MCF 10A (cell line): ENCODE measurements at regions of chr2 and their contacts with region 1.

Region 1: DNA sequence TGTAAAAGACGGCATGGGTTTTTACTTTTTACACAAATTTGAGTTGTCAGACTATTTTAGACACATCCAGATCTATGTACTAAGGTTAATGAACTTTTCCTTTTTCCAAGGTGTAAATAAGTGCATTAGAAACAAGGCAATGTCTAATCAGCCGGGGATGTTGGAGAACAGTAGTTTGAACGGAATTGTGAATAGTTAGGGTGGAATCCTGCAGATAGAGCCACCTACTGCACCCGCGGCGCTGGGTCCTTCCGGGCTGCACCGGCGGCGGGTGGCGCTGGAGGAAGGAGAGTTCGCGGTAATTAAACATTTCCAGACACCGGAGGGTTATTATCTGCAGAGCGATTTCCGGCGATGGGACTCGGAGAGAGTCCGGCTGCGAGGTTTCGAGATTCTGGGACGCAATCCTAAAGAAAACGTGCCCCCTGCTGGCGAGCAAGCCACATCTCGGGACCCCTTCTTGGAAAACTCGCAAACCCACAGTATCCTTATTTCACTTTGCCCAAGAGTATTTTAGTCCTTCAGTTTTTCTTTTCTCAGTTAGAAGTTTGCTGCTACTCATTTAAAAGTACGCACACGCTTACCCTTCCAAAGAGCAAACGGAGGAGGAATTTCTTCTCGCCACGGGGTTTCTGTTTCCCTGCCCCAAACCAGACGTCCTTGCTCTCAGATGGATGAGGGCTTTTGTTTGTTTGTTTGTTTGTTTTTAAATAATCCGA is 4.5 kb upstream of the OSR1 start:
- DNase-seq: peak; percentile 88
- H3K4me3 Mint-ChIP-seq: peak overlapping the region; percentile 87
- H3K27ac Mint-ChIP-seq: no peak overlapping the region
- H3K4me1 Mint-ChIP-seq: peaks cover 6% of the 10 kb centered on the region
- H3K27me3 Mint-ChIP-seq: no peaks in the 10 kb centered on the region
- CTCF ChIP-seq: peak; percentile 70

Region 2: GRCh38 chr2:18435421-18436037 is 927.4 kb before region 1 on chr2:
- CTCF ChIA-PET with region 1: interaction called, 3 read pairs
- POLR2A ChIA-PET with region 1: no interaction called
- intact Hi-C with region 1: loop called (anchors 1 kb)
- DNase-seq: peak; percentile 69
- H3K4me3 Mint-ChIP-seq: no peak overlapping the region
- H3K27ac Mint-ChIP-seq: no peak overlapping the region
- H3K4me1 Mint-ChIP-seq: no peaks in the 10 kb centered on the region
- H3K27me3 Mint-ChIP-seq: no peaks in the 10 kb centered on the region
- CTCF ChIP-seq: peak; percentile 63

Region 3: GRCh38 chr2:18855027-18855426 is 507.9 kb before region 1 on chr2:
- CTCF ChIA-PET with region 1: interaction called, 3 read pairs
- POLR2A ChIA-PET with region 1: no interaction called
- intact Hi-C with region 1: loop called (anchors 1 kb)
- DNase-seq: peak; percentile 32
- H3K4me3 Mint-ChIP-seq: no peak overlapping the region
- H3K27ac Mint-ChIP-seq: no peak overlapping the region
- H3K4me1 Mint-ChIP-seq: no peaks in the 10 kb centered on the region
- H3K27me3 Mint-ChIP-seq: no peaks in the 10 kb centered on the region
- CTCF ChIP-seq: peak; percentile 35

Region 4: DNA sequence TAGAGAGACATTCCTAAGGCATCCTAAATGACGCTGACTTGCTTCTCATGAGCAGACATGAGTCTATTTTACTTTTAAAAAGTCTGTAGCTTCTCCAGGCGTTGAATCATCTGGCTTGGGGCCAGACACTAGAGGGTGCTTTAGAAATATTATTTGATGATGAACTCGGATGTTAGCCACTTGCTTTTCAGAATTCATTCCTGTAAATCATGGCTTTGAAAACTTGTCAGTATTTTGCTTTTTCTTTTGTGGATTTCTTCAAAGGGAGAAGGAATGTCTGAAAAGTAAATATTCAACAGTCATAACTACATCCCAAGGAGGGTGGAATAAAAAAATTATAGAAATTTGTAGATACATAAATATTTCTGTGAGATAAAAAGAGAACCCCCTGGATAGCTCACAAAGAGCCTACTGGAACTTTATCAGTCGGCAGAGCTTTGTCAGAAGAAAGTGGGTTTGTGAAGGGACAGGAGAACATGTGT is 375.3 kb before region 1 on chr2:
- CTCF ChIA-PET with region 1: interaction called, 5 read pairs
- POLR2A ChIA-PET with region 1: no interaction called
- intact Hi-C with region 1: loop called (anchors 1 kb)
- DNase-seq: peak; percentile 94
- H3K4me3 Mint-ChIP-seq: no peak overlapping the region
- H3K27ac Mint-ChIP-seq: peak overlapping the region; percentile 27
- H3K4me1 Mint-ChIP-seq: peaks cover 17% of the 10 kb centered on the region
- H3K27me3 Mint-ChIP-seq: no peaks in the 10 kb centered on the region
- CTCF ChIP-seq: no peak

Region 5: DNA sequence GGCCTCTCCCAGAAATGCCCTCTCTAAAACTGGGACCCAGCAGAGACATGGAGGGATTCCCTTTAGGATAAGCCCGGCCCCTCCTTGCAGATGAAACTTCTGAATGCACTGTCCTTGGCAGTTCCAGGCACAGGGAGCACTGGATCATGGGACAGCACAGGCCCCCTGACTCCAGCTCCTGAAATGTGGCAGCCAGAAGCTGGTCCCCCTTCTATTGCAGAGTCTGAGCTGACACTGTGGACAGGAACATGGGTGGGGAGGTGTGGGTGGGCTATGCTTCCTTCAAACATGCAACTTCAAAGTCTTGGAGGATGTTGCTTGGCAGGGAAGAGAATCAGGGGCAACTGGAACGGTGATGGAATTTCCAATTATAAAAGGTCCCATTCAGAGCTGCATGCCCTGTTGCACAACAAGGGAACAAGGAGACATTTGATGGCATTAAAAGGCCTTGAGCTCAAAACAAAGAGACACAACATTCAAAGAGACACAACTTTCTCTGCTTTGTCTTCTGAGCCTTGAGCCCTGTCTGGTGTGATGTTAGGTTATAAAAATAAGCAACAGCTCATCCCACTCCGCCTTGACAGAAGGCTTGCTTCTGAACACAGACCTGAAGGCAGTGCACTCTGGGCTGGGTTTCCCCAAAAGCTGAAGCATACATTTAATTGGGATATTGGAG is 243.4 kb before region 1 on chr2:
- CTCF ChIA-PET with region 1: no interaction called
- POLR2A ChIA-PET with region 1: no interaction called
- intact Hi-C with region 1: no loop called
- DNase-seq: no peak
- H3K4me3 Mint-ChIP-seq: no peak overlapping the region
- H3K27ac Mint-ChIP-seq: peak overlapping the region; percentile 39
- H3K4me1 Mint-ChIP-seq: peaks cover 34% of the 10 kb centered on the region
- H3K27me3 Mint-ChIP-seq: no peaks in the 10 kb centered on the region
- CTCF ChIP-seq: no peak

Region 6: DNA sequence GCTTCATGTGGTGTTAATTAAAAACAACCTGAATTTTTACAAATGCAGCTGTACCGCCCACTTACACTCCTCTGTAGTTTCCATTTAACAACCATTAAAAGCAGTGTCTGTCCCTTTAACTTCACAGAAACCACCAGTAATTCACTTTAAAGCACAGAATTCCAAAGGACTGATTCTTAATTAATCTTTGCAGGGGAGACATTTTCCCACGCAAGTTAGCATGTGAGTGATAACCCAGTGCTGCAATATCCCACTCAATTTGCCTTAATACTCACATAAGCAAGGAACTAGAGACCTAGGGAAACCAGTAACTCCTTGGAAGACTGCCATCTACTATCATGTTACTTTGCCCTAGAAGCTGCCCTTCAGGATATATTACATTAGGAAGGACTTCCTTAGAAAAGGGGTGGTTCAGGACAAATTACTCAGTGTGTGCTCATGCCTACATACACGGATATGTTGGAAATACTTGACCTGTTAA is 106.8 kb before region 1 on chr2:
- CTCF ChIA-PET with region 1: no interaction called
- POLR2A ChIA-PET with region 1: no interaction called
- intact Hi-C with region 1: no loop called
- DNase-seq: peak; percentile 85
- H3K4me3 Mint-ChIP-seq: no peak overlapping the region
- H3K27ac Mint-ChIP-seq: peak overlapping the region; percentile 69
- H3K4me1 Mint-ChIP-seq: peaks cover 19% of the 10 kb centered on the region
- H3K27me3 Mint-ChIP-seq: no peaks in the 10 kb centered on the region
- CTCF ChIP-seq: no peak

Region 7: DNA sequence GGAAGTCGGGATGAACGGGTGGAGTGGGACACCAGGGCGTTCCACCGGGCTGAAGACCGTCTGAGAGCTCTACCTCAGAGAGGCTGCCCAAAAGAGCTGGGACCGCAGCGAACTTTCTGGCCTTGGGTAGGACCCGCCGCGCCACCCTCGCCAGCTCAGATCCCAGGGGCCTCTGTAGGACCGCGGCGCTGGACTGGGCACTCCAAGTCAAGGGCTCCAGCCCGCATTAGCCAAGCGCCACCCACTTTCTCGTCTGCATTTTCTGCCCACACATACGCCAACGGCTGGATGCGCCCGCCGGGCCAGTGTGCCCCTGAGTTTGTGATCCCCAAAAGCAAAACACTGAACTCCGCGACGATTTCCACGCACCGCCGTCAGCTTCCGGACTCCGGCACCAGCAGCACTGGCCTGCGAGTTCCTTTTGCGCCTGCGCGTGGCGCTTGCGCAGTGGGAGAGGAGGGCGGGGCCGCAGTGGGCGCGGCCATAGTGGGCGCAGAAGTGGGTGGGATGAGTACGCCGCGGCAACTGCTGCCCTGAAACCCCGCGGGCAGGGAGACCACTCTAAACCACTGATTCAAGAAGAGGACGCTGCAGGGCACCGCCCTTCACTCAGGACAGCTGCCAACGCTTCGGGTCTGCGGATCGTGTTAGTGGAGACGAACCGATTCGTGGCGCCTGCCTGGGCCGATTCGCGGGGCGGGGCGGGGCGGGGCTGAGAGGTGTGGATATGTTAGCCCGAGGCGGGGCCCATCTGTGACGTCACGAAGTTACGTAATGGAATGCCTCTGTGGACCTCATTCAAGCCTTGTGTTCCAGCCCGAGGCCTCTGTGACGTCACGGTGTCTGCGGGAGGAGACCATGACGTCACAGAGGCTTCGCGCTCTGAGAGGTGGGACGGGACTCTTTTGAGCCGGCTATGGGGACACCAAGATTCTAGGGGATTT is 15.0 kb before region 1 on chr2:
- CTCF ChIA-PET with region 1: interaction called, 3 read pairs
- POLR2A ChIA-PET with region 1: interaction called, 19 read pairs
- intact Hi-C with region 1: no loop called
- DNase-seq: peak; percentile 96
- H3K4me3 Mint-ChIP-seq: peak overlapping the region; percentile 95
- H3K27ac Mint-ChIP-seq: peak overlapping the region; percentile 99
- H3K4me1 Mint-ChIP-seq: no peaks in the 10 kb centered on the region
- H3K27me3 Mint-ChIP-seq: no peaks in the 10 kb centered on the region
- CTCF ChIP-seq: no peak